ENCODE measurements at regions of chr18 and their contacts with region 1.

Region 1: DNA sequence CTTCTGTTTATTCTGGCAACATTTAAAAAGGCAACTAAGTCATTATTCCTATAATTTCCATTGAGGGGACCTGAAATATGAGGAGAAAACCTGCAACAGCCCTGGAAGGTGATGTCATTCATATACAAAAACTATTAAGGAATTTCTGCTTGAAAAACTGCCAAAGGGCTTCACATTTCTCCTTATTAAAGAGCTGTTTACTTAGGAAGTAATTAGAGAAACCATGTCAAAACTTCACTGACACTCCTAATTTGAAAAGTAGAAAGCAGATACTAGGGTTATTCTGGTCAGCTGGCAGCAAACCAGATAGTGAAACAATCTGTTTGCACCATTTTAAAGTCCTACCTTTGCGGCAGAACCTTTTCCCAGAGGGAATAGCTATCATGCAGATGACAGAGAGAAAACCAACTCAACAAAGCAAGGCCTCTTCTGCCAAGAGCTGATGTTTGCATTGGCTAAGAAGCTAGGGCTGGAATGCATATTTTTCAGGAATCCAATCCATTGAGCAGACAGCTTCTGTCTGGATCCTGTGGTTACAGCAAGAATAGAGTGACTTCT is 592.2 kb upstream of the SYT4 start:
- DNase-seq: peak; percentile 28
- ATAC-seq: peak; percentile 82
- H3K4me3 ChIP-seq: no peak overlapping the region
- H3K27ac ChIP-seq: peak overlapping the region; percentile 20; the same call in 1 of the 2 replicates
- H3K4me1 ChIP-seq: no peaks in the 10 kb centered on the region
- H3K27me3 ChIP-seq: no peaks in the 10 kb centered on the region
- CTCF ChIP-seq: no peak
- POLR2A ChIP-seq: no peak
- RAD21 ChIP-seq: no peak

Region 2: GRCh38 chr18:43805646-43806194 is 63.8 kb before region 1 on chr18:
- CTCF ChIA-PET with region 1: no interaction called
- POLR2A ChIA-PET with region 1: no interaction called
- dilution Hi-C with region 1: no loop called
- in situ Hi-C with region 1: no loop called
- intact Hi-C with region 1: loop called (anchors 10 kb)
- DNase-seq: no peak
- ATAC-seq: no peak; the same call in 1 of the 2 replicates
- H3K4me3 ChIP-seq: no peak overlapping the region
- H3K27ac ChIP-seq: no peak overlapping the region
- H3K4me1 ChIP-seq: no peaks in the 10 kb centered on the region
- H3K27me3 ChIP-seq: no peaks in the 10 kb centered on the region
- CTCF ChIP-seq: no peak
- POLR2A ChIP-seq: no peak
- RAD21 ChIP-seq: no peak

Measured in IMR-90 (cell line).